ENCODE measurements at regions of chr21 and their contacts with region 1.

Region 1: DNA sequence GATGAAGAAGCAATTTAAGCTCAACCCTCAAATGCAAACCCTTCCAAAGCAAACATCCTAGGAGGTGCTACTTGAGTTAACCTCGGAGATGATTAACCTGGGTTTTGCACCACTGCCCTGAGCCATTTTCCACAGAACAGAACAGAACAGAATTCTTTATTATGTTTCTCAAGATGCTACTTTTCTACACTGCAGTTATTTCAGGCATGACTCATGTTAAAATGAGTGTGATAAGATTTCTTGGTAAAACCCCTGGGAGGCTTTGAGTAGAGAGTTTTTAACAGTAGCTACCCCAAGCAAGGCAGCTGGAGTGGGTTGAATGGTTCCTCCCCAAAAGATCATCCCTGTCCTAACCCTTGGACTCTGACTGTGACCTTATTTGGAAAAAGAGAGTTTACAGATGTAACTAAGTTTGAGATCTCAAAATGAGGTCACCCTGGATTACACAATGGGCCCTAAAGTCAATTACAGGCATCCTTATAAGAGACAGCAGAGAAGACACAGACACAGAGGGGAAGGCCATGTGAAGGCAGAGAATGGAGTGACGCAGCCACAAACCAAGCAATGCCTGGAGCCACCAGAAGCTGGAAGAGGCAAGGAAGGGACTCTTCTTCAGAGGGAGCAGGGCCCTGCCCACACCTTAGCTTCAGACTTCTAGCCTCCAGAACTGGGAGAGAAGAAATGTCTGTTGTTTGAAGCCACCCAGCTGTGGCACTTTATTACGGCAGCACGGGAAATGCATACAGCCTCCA is 153.4 kb downstream of the ETS2 start:
- DNase-seq: peak; percentile 52 to 57
- H3K4me3 ChIP-seq: no peak overlapping the region
- H3K4me3 Mint-ChIP-seq: peak overlapping the region; percentile 57
- H3K27ac Mint-ChIP-seq: peak overlapping the region; percentile 81
- H3K4me1 ChIP-seq: peaks cover 56% of the 10 kb centered on the region
- H3K4me1 Mint-ChIP-seq: peaks cover 19% of the 10 kb centered on the region
- H3K27me3 ChIP-seq: no peaks in the 10 kb centered on the region
- H3K27me3 Mint-ChIP-seq: no peaks in the 10 kb centered on the region
- CTCF ChIP-seq: no peak

Region 2: DNA sequence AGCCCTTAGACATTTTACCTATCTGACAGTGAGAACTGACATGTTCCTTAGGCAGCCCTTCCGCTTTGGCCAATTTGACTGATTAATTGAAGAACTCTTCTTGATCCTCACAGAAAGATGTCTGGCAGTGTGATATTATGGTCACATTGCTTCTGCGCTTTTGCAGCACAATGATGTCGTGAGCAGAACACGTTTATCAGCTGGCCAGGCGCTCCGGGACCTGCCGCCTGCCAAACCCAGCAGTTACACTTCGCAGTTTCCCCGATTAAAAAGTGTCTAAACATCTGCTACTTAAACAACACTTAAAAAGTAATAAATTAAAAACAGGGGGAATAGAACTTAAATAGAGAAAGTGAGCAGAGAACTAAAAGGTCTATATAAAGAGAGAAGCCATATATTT is 256.9 kb before region 1 on chr21:
- CTCF ChIA-PET with region 1: interaction called, 11 read pairs
- POLR2A ChIA-PET with region 1: no interaction called
- intact Hi-C with region 1: no loop called
- DNase-seq: no peak
- H3K4me3 ChIP-seq: no peak overlapping the region
- H3K4me3 Mint-ChIP-seq: no peak overlapping the region
- H3K27ac Mint-ChIP-seq: no peak overlapping the region
- H3K4me1 ChIP-seq: no peaks in the 10 kb centered on the region
- H3K4me1 Mint-ChIP-seq: no peaks in the 10 kb centered on the region
- H3K27me3 ChIP-seq: no peaks in the 10 kb centered on the region; the same call in 1 of the 2 replicates
- H3K27me3 Mint-ChIP-seq: peaks cover 5% of the 10 kb centered on the region
- CTCF ChIP-seq: no peak

Region 3: DNA sequence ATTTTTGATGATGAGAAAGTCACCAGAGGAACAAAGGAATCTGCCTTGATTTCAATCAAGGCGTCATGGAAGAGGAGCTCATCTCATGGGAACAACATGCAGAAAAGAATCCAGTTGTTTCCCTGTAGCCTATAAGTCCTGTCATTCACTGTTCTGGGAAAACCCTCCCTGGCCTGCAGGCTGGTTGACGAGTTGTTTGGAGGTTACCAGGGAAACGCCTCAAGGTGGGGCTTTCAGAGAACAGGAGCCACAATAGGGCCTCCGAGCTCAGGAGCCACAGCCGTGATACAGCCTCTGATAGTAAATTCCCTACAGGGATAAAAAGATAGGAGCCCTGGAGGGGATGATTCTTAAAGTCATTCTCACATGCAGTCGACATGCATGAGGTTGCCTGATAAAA is 88.9 kb after region 1 on chr21:
- CTCF ChIA-PET with region 1: no interaction called
- POLR2A ChIA-PET with region 1: no interaction called
- intact Hi-C with region 1: no loop called
- DNase-seq: peak; percentile 55 to 63
- H3K4me3 ChIP-seq: no peak overlapping the region
- H3K4me3 Mint-ChIP-seq: no peak overlapping the region
- H3K27ac Mint-ChIP-seq: no peak overlapping the region
- H3K4me1 ChIP-seq: no peaks in the 10 kb centered on the region
- H3K4me1 Mint-ChIP-seq: peaks cover 6% of the 10 kb centered on the region
- H3K27me3 ChIP-seq: no peaks in the 10 kb centered on the region
- H3K27me3 Mint-ChIP-seq: no peaks in the 10 kb centered on the region
- CTCF ChIP-seq: no peak